H1 (cell line): ENCODE measurements at regions of chr17 and their contacts with region 1.

Region 1: GRCh38 chr17:62987137-62987536 is 21.1 kb downstream of the TANC2 start:
- DNase-seq: peak in 1 of 2 experiments; percentile 73
- H3K4me3 ChIP-seq: no peak overlapping the region
- H3K27ac ChIP-seq: no peak overlapping the region
- H3K4me1 ChIP-seq: no peaks in the 10 kb centered on the region
- H3K27me3 ChIP-seq: no peaks in the 10 kb centered on the region; a peak in 1 of 7 replicates
- CTCF ChIP-seq: peak; percentile 57 to 85 (median 84)
- EP300 ChIP-seq: no peak
- POLR2A ChIP-seq: no peak
- RAD21 ChIP-seq: peak; percentile 49 to 51

Region 2: DNA sequence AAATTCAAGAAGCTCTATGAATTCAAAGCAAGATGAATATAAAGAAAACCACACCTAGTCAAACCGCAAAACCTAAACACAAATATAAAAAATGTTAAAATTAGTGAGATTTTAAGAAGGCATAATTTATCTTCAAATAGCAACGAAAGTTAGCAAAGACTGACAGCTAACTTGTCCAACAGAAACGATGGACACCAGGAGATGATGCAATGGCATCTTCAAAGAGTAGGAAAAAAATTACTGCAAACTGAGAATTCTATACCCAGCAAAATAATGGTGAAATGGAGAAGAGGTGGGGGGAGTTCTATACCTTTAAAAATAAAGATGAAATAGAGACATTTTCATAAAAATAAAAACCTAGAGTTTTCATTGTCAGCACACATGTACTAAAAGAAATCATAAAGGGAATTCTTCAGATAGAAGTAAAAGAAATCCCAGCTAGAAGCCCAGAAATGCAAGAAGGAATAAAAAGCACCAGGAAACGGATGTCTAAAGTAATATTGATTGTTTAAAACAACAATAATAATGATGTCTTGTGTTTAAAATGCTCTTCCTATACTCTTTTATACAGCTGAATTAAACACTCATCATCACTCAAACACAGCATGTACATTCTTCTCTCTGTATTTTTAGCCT is 45.7 kb before region 1 on chr17:
- CTCF ChIA-PET with region 1: no interaction called
- POLR2A ChIA-PET with region 1: no interaction called
- DNase-seq: no peak
- H3K4me3 ChIP-seq: no peak overlapping the region
- H3K27ac ChIP-seq: no peak overlapping the region
- H3K4me1 ChIP-seq: no peaks in the 10 kb centered on the region
- H3K27me3 ChIP-seq: no peaks in the 10 kb centered on the region
- CTCF ChIP-seq: no peak
- EP300 ChIP-seq: no peak
- POLR2A ChIP-seq: no peak
- RAD21 ChIP-seq: no peak

Region 3: DNA sequence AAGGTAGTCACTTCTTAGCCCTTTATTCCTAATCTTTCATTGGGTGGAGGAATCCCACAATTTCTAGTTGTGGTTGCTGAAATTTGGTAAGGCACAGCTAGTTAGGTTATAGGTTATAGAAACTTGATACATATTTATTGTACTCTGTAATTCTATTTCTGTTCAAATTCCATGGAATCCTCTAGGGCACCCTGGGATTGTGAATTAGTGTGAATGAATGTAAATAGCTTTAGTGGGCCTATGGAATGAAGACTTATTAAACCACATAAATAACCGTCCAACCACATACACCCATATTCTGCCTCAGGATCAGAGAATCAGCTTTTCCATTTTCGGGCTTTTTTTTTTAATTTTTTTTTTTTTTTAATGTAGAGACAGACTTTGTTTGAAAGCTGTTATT is 11.9 kb before region 1 on chr17:
- CTCF ChIA-PET with region 1: interaction called, 14 read pairs
- POLR2A ChIA-PET with region 1: interaction called, 9 read pairs
- DNase-seq: no peak
- H3K4me3 ChIP-seq: no peak overlapping the region
- H3K27ac ChIP-seq: no peak overlapping the region; the same call in 1 of the 2 replicates
- H3K4me1 ChIP-seq: no peaks in the 10 kb centered on the region
- H3K27me3 ChIP-seq: no peaks in the 10 kb centered on the region
- CTCF ChIP-seq: no peak
- EP300 ChIP-seq: no peak
- POLR2A ChIP-seq: no peak
- RAD21 ChIP-seq: no peak

Region 4: DNA sequence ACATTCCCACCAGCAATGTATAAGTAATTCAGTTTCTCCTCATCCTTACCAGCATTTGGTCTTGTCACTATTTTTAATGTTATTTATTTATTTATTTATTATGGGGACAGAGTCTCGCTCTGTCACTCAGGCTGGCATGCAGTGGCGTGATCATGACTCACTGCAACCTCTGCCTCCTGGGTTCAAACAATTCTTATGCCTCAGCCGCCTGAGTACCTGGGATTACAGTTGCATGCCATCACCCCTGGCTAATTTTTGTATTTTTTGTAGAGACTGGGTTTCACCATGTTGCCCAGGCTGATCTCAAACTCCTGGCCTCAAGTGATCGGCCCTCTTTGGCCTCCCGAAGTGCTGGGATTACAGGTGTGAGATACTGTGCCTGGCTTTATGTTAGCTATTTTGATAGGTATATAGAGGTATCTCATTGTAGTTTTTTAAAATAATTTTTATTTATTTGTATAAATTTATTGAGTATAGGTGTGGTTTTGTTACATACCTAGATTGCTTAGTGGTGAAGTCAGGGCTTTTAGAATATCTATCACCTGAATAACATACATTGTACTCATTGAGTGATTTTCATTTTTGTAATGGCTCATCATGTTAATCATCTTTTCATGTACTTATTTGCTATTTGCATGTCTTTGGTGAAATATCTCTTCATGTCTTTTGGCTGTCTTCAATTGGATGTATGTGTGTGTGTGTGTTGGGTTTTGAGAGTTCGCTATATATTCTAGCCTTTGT is 32.2 kb after region 1 on chr17:
- CTCF ChIA-PET with region 1: no interaction called
- POLR2A ChIA-PET with region 1: no interaction called
- DNase-seq: no peak
- H3K4me3 ChIP-seq: no peak overlapping the region
- H3K27ac ChIP-seq: no peak overlapping the region
- H3K4me1 ChIP-seq: no peaks in the 10 kb centered on the region
- H3K27me3 ChIP-seq: no peaks in the 10 kb centered on the region
- CTCF ChIP-seq: no peak
- EP300 ChIP-seq: no peak
- POLR2A ChIP-seq: no peak
- RAD21 ChIP-seq: no peak

Region 5: DNA sequence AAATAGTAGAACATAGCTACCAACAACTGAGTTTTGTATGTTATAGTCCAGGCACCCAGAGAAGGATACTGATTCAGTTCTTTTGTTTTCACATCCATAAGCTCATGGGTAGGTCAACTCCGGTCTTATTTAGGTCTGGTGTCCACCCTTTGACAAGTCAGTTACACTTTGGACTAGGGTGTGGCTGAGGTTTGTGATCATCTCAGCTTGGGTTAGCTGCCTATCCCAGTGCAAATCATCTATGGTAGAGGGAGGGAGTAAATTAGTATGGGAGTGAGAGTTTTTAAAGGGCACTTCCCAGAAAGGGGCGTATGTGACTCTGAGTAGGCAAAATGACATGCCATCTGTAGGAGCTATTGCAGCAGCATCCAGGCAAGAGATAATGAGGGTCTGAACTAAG is 45.0 kb after region 1 on chr17:
- CTCF ChIA-PET with region 1: interaction called, 10 read pairs
- POLR2A ChIA-PET with region 1: no interaction called
- DNase-seq: no peak
- H3K4me3 ChIP-seq: no peak overlapping the region
- H3K27ac ChIP-seq: no peak overlapping the region
- H3K4me1 ChIP-seq: peaks cover 0 to 2% (median 0%) of the 10 kb centered on the region in 4 experiments; a peak in 1 of 7 replicates
- H3K27me3 ChIP-seq: no peaks in the 10 kb centered on the region
- CTCF ChIP-seq: no peak
- EP300 ChIP-seq: no peak
- POLR2A ChIP-seq: no peak
- RAD21 ChIP-seq: no peak